Heart left ventricle (tissue), 16 donors: ENCODE measurements at regions of chr19 and their contacts with region 1.

Region 1: GRCh38 chr19:310141-310651 is 19.0 kb upstream of the PLPP2 start:
- DNase-seq: peak in 1 of 5 donors; percentile 16
- ATAC-seq: no peak
- H3K4me3 ChIP-seq: peak overlapping the region; percentile 40 to 58 (median 49)
- H3K27ac ChIP-seq: peak overlapping the region in 11 of 12 donors; percentile 74 to 94 (median 85)
- H3K4me1 ChIP-seq: peaks cover 0 to 8% (median 0%) of the 10 kb centered on the region in 12 donors
- H3K27me3 ChIP-seq: no peaks in the 10 kb centered on the region
- CTCF ChIP-seq: no peak
- POLR2A ChIP-seq: no peak

Region 2: GRCh38 chr19:275000-275399 is 35.2 kb before region 1 on chr19:
- intact Hi-C with region 1: no loop called
- DNase-seq: no peak
- ATAC-seq: no peak
- H3K4me3 ChIP-seq: no peak overlapping the region
- H3K27ac ChIP-seq: no peak overlapping the region
- H3K4me1 ChIP-seq: no peaks in the 10 kb centered on the region
- H3K27me3 ChIP-seq: peaks cover 0 to 30% (median 11%) of the 10 kb centered on the region in 9 donors
- CTCF ChIP-seq: no peak
- POLR2A ChIP-seq: no peak

Region 3: GRCh38 chr19:343941-344624 is 33.9 kb after region 1 on chr19:
- intact Hi-C with region 1: loop called in 1 of 10 experiments (anchors 2 kb)
- DNase-seq: peak in 1 of 5 donors; percentile 64
- ATAC-seq: peak in 1 of 4 donors; percentile 32
- H3K4me3 ChIP-seq: peak overlapping the region; percentile 61 to 98 (median 89)
- H3K27ac ChIP-seq: peak overlapping the region; percentile 50 to 90 (median 86)
- H3K4me1 ChIP-seq: peaks cover 0 to 44% (median 29%) of the 10 kb centered on the region in 12 donors
- H3K27me3 ChIP-seq: no peaks in the 10 kb centered on the region
- CTCF ChIP-seq: no peak
- POLR2A ChIP-seq: no peak

Region 4: DNA sequence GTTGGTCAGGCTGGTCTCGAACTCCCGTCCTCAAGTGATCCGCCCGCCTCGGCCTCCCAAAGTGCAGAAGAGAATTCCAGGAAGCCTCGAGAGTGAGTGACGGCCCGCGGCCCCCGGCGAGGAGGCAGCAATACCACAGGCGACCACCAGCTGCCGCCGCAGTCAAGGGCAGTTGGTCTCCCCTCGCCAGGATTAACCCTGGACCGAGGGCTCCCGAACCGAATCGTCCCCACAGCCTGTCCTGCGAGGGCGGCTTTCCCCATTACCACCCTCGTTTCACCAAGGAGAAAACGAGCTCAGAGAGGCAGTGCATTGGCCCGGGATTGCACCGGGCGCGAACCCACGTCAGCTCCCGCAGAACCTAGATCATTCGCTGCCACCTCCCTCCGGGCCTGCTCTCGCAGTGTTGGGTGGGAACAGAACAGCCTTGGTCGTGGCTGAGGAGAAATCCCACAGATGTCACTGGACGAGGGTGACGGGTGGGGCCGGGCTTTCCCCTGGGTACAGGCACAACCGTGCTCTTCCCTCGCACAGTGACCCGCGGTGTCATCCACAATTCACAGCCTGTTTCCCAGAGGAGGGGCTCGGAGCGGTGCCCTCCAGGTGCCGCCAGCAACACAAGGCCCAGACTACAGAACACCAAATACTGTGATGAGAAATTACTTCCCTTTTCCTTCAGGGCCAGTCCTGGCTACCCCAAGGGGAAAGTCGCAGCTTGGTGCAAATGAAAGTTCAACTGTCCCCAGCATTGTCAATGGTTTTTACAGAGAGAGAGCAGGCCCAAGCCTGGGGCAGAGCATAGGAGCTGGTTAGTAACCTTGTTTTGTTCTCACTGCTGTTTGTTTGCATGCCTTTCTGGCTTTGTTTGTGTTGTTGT is 74.0 kb after region 1 on chr19:
- intact Hi-C with region 1: no loop called
- DNase-seq: peak in 1 of 5 donors; percentile 72
- ATAC-seq: peak; percentile 42 to 87 (median 74)
- H3K4me3 ChIP-seq: no peak overlapping the region
- H3K27ac ChIP-seq: no peak overlapping the region
- H3K4me1 ChIP-seq: peaks cover 0 to 4% (median 0%) of the 10 kb centered on the region in 12 donors
- H3K27me3 ChIP-seq: peaks cover 0 to 39% (median 15%) of the 10 kb centered on the region in 9 donors
- CTCF ChIP-seq: peak; percentile 33 to 74 (median 62)
- POLR2A ChIP-seq: no peak